HEK293 (cell line): ENCODE measurements at regions of chr18 and their contacts with region 1.

Region 1: DNA sequence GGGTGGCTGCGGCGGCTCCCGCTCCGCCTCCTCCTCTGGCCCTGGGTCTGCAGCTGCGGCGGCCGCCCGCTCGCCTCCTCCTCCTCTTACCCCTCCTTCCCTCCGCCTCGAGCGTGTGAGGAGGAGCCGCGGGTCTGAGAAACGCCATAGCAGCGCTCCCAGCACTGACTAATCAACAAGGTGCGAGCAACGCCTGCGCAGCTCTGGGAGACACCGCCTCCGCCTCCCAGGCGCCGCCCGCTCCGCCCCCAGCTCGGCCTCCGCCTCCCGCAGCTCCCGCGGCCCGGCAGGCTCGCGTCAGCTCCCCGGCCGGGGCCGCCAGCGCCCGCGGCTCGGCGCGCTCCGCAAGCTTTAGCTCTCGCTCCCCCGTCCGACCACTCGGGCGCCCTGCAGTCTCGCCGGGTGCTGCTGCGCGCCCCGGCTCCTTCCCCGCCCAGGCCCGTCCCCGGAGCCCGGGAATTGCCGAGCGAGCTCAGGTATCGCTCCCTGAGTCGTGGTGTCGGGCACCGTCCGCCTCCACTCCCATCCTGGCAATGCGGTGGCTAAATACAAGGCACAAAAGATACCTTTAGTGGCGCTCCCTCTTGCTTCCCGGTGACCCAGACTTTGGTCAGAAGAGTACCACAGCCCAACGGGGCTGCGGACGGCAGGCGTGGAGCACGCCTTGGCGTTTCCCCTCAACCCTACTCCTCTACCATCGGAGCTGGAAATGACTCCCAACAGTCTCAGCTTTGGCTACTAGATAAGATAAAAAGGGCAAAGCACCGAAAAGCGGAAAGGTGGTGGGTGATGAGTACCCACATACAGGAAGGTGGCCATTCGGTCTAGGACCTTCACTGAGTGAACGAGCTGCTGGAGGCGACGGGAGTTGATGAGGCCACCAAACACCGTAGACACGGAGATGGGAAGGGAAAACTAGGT is at the start of gene GAREM1:
- H3K4me3 ChIP-seq: peak within 1 kb of the TSS; percentile 83
- H3K27ac ChIP-seq: peak within 1 kb of the TSS; percentile 70; the same call in 1 of the 2 replicates
- H3K4me1 ChIP-seq: peaks cover 3% of the 10 kb centered on the region; the same call in 1 of the 2 replicates
- CTCF ChIP-seq: peak; percentile 35; the same call in 1 of the 2 replicates

Region 2: GRCh38 chr18:31783059-31783458 is 687.9 kb before region 1 on chr18:
- CTCF ChIA-PET with region 1: no interaction called
- POLR2A ChIA-PET with region 1: no interaction called
- H3K4me3 ChIP-seq: no peak overlapping the region
- H3K27ac ChIP-seq: no peak overlapping the region
- H3K4me1 ChIP-seq: no peaks in the 10 kb centered on the region
- CTCF ChIP-seq: no peak

Region 3: DNA sequence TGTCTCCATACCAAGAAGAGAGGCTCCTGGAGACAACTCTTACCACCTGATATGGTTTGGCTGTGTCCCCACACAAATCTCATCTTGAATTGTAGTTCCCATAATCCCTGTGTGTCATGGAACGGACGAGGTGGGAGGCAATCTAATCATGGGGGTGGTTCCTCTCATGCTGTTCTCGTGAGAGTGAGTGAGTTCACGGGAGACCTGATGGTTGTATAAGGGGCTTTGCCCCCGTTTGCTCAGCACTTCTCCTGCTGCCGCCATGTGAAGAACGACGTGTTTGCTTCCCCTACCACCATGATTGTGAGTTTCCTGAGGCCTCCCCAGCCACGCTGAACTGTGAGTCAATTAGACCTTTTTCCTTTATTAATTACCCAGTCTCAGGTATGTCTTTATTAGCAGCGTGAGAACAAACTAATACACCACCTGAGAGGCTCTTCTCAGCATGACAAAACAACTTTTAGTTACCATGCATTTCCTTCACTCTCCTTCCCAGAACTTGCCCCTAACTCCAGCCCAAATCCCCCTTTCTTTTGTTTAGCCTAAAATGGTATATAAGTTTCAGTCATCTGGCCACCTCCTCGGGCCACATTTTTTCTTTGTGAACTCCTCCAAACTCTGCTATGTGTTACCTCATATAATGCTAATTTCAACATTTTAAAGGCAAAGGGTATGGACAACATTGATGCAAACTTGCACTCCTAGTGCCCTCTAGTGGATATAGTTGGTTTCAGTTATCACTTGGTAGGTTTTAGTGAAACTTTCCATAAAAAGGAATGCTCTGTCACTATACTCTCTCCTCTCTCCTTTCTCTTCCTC is 651.7 kb before region 1 on chr18:
- CTCF ChIA-PET with region 1: no interaction called
- POLR2A ChIA-PET with region 1: no interaction called
- H3K4me3 ChIP-seq: no peak overlapping the region
- H3K27ac ChIP-seq: no peak overlapping the region
- H3K4me1 ChIP-seq: no peaks in the 10 kb centered on the region
- CTCF ChIP-seq: peak; percentile 45; the same call in 1 of the 2 replicates

Region 4: DNA sequence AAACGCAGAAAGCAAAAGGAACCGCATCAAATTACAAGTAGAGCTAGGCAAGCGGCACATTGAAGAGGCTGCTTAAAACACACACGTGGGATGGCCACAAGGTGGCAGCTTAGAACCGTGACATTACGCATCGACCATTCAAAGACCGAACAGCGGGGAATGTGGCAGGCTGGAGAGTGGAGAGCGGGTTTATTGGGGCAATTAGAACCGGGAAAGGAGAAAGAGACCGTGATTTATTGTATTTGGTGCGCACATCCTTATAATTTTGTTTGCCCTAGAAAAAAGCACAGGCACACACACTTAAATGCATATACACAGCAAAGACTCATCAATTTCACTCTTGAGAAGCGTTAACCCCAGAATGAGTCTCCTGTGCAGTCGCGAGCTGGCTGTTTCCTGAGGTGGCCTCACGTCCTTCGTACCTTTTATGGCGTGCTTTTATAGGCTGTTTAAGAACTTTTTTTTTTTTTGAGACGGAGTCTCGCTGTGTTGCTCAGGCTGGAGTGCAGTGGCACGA is 312.8 kb before region 1 on chr18:
- CTCF ChIA-PET with region 1: interaction called, 15 read pairs
- POLR2A ChIA-PET with region 1: interaction called, 4 read pairs
- H3K4me3 ChIP-seq: peak overlapping the region; percentile 14
- H3K27ac ChIP-seq: no peak overlapping the region
- H3K4me1 ChIP-seq: no peaks in the 10 kb centered on the region
- CTCF ChIP-seq: peak; percentile 88

Region 5: DNA sequence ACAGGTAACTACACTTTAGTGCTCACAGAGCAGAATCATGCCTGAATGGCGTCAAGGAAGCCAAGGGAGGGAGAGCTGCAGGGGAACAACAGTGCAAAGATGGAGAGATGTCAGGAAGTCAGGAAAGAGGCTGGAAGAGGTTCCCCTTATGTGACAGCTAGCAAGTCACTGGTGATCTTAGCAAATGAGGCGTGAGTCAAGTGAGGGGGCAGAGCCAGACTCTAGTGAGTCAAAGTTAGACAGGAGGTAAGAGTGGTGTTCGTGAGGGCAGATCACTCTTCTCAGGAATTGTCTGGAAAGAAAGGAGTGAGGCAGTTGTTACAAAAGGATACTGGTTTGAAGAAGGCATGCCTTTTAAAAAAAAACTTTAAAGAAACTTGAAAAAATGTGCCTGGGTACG is 194.1 kb before region 1 on chr18:
- CTCF ChIA-PET with region 1: interaction called, 32 read pairs
- POLR2A ChIA-PET with region 1: interaction called, 12 read pairs
- H3K4me3 ChIP-seq: no peak overlapping the region
- H3K27ac ChIP-seq: no peak overlapping the region
- H3K4me1 ChIP-seq: no peaks in the 10 kb centered on the region
- CTCF ChIP-seq: no peak

Region 6: DNA sequence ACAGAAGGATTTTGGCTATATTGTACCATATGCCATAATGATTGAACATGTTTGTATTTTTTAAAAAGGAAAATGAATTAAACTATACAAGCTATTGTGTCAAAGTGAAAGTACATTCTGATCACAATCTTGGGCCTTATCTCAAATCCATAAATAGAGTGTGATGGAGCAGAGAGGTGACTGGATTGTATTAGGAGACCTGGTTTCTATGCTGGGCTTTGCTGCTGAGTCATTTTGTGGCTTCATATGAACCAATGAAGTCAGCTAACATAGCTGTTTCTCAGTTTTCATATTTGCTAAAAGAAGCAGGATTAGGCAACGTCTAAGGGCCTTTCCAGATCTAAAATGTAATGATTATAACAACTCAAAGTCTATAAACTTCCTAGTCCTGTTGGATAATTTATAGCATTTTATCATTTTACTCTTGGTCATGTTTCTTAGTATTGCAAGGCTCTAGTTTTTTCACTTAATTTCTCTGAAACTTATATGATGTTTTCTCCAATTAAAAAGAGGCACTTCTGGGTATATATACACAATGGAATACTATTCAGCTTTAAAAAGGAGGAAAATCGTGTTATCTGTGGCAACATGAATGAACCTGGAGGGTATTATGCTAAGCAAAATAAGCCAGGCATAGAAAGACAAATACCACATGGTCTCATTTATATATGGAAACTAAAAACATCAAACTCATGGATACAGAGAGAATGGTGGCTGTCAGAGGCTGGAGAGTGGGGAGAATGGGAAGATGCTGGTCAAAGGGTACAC is 168.8 kb before region 1 on chr18:
- CTCF ChIA-PET with region 1: interaction called, 11 read pairs
- POLR2A ChIA-PET with region 1: no interaction called
- H3K4me3 ChIP-seq: no peak overlapping the region
- H3K27ac ChIP-seq: no peak overlapping the region
- H3K4me1 ChIP-seq: no peaks in the 10 kb centered on the region
- CTCF ChIP-seq: no peak

Region 7: GRCh38 chr18:32373995-32374394 is 97.0 kb before region 1 on chr18:
- CTCF ChIA-PET with region 1: interaction called, 11 read pairs
- POLR2A ChIA-PET with region 1: interaction called, 12 read pairs
- H3K4me3 ChIP-seq: no peak overlapping the region
- H3K27ac ChIP-seq: no peak overlapping the region
- H3K4me1 ChIP-seq: peaks cover 10% of the 10 kb centered on the region
- CTCF ChIP-seq: no peak

Region 8: GRCh38 chr18:32446780-32447179 is 24.2 kb before region 1 on chr18:
- CTCF ChIA-PET with region 1: interaction called, 31 read pairs
- POLR2A ChIA-PET with region 1: interaction called, 3 read pairs
- H3K4me3 ChIP-seq: no peak overlapping the region
- H3K27ac ChIP-seq: no peak overlapping the region
- H3K4me1 ChIP-seq: peaks cover 2% of the 10 kb centered on the region
- CTCF ChIP-seq: no peak

Region 9: GRCh38 chr18:32629981-32630700 is 159.2 kb after region 1 on chr18:
- CTCF ChIA-PET with region 1: no interaction called
- POLR2A ChIA-PET with region 1: no interaction called
- H3K4me3 ChIP-seq: no peak overlapping the region
- H3K27ac ChIP-seq: no peak overlapping the region
- H3K4me1 ChIP-seq: no peaks in the 10 kb centered on the region
- CTCF ChIP-seq: no peak